ENCODE measurements at regions of chr12 and their contacts with region 1.

Region 1: GRCh38 chr12:132489602-132490239 is at the start of gene FBRSL1:
- DNase-seq: peak; percentile 98
- ATAC-seq: peak; percentile 74
- H3K4me3 Mint-ChIP-seq: peak within 1 kb of the TSS; percentile 85
- H3K27ac Mint-ChIP-seq: peak within 1 kb of the TSS; percentile 85
- H3K4me1 Mint-ChIP-seq: peaks cover 61% of the 10 kb centered on the region
- H3K27me3 Mint-ChIP-seq: no peaks in the 10 kb centered on the region
- total RNA-seq, gene FBRSL1: 35.7 to 55.1 TPM

Region 2: GRCh38 chr12:131894313-131894860 is 595.3 kb before region 1 on chr12 and contains the start of gene ULK1:
- CTCF ChIA-PET with region 1: no interaction called
- POLR2A ChIA-PET with region 1: no interaction called
- intact Hi-C with region 1: loop called in 1 of 2 experiments (anchors 1 kb)
- DNase-seq: peak; percentile 96
- ATAC-seq: peak; percentile 86
- H3K4me3 Mint-ChIP-seq: peak within 1 kb of the TSS; percentile 78
- H3K27ac Mint-ChIP-seq: peak within 1 kb of the TSS; percentile 55
- H3K4me1 Mint-ChIP-seq: peaks cover 12% of the 10 kb centered on the region
- H3K27me3 Mint-ChIP-seq: no peaks in the 10 kb centered on the region
- total RNA-seq, gene ULK1: 12.9 to 14.4 TPM

Region 3: DNA sequence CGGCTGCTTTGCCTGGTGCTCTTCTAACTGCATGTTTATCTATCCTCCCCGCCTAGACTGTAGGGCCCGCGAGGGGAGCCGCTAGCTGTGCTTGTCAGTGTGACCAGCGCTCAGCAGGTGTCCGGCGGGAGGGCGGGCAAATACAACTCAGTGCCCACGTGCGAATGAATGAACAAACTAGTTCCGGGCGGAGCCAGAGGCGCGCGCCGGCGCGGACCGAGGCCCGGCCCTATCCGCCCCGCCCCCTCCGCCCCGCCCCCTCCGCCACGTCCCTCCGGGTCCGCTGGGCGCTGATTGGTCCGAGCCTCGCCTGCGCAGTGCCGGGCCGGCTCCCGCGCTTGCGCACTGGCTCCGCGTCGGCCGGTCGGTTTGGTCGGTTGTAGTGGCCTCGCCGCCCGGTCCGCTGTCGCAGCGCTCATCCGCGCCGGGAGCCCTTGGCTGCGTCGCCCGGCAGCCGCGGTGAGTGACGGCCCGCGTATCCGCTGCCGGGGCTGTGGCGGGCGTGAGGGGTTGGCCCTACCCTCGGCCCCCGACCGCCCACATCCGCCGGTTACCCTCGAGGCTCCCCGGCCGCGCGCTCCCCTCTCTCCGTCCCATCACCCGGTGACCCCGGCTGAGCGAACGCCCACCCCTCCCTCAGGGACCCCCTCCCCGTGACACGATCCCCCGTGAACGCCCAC is 405.6 kb before region 1 on chr12:
- CTCF ChIA-PET with region 1: no interaction called
- POLR2A ChIA-PET with region 1: no interaction called
- intact Hi-C with region 1: loop called in 1 of 2 experiments (anchors 5 kb)
- DNase-seq: peak; percentile 94
- ATAC-seq: peak; percentile 95
- H3K4me3 Mint-ChIP-seq: peak overlapping the region; percentile 86
- H3K27ac Mint-ChIP-seq: peak overlapping the region; percentile 91
- H3K4me1 Mint-ChIP-seq: peaks cover 23% of the 10 kb centered on the region
- H3K27me3 Mint-ChIP-seq: no peaks in the 10 kb centered on the region

Region 4: DNA sequence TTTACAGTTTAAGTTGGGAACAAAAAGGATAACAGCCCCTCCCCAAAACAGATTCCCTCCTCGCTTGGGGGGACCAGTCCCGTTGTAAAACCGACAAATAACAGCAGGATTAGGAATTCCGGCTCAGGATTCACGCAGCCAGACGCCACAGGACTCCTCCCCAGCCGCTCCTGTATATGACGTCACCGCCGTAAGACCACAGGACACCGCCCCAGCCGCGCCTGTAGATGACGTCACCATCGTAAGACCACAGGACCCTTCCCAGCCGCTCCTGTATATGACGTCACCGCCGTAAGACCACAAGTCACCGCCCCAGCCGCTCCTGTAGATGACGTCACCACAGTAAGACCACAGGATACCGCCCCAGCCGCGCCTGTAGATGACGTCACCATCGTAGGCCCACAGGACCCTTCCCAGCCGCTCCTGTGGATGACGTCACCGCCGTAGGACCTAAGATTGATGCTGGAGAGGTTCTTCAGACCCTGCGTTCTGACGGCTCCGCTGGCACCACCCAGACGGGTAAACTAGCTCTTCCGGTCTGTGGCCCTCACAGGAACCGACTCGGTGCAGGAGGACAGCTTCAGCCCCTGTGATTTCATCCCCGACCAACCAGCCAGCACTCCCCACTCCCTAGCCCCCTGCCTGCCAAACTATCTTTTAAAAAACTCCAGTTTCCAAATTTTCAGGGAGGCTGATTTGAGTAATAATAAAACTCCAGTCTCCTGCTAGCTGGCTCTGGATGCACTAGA is 43.7 kb before region 1 on chr12:
- CTCF ChIA-PET with region 1: no interaction called
- POLR2A ChIA-PET with region 1: no interaction called
- intact Hi-C with region 1: loop called in 1 of 2 experiments (anchors 1 kb)
- DNase-seq: peak; percentile 79
- ATAC-seq: peak; percentile 22
- H3K4me3 Mint-ChIP-seq: peak overlapping the region; percentile 87
- H3K27ac Mint-ChIP-seq: peak overlapping the region; percentile 100
- H3K4me1 Mint-ChIP-seq: peaks cover 45% of the 10 kb centered on the region
- H3K27me3 Mint-ChIP-seq: no peaks in the 10 kb centered on the region

Region 5: DNA sequence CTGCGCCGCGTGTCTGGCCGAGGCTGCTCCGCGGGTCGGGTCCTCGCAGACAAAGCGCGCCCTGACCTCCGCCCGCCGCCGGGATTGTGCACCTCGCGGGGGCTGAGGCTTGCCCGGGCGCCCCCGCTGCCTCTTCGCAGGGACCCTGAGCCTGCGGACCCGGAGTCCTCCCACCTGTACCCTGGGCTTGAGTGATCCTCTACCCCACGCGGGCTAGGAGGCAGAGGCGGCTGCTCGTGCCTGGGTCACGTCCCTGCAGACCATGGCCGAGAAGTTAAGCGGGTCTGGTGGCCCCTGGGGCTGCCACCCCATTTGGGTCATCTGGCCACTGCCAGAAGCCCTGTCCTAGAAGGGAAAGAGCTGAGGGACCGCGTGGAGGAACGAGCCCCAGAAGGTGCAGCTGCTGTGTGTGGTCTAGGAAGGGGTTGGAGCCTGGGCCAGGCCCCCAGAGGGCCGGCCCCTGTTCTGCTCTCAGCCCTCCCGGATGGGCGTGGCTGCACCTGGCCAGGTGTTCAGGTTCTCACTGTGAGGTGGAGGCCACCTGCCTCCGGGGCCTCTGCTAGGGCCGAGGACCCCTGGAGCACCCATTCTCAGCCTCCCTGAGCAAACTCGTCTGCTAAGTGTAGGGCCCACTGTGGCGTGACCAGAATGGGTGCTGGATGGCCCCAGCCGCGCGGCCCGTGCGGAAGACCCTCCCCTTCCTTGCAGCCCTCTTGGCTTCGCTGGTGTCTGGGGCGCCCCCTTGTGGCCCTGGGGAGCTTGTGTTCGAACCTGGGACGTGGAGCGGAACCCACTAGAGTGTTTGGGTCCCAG is 71.1 kb after region 1 on chr12:
- CTCF ChIA-PET with region 1: interaction called, 3 read pairs
- POLR2A ChIA-PET with region 1: no interaction called
- intact Hi-C with region 1: loop called in 1 of 2 experiments (anchors 1 kb)
- DNase-seq: peak; percentile 90
- ATAC-seq: peak; percentile 74
- H3K4me3 Mint-ChIP-seq: peak overlapping the region; percentile 73
- H3K27ac Mint-ChIP-seq: no peak overlapping the region
- H3K4me1 Mint-ChIP-seq: peaks cover 13% of the 10 kb centered on the region
- H3K27me3 Mint-ChIP-seq: peaks cover 7% of the 10 kb centered on the region

Region 6: DNA sequence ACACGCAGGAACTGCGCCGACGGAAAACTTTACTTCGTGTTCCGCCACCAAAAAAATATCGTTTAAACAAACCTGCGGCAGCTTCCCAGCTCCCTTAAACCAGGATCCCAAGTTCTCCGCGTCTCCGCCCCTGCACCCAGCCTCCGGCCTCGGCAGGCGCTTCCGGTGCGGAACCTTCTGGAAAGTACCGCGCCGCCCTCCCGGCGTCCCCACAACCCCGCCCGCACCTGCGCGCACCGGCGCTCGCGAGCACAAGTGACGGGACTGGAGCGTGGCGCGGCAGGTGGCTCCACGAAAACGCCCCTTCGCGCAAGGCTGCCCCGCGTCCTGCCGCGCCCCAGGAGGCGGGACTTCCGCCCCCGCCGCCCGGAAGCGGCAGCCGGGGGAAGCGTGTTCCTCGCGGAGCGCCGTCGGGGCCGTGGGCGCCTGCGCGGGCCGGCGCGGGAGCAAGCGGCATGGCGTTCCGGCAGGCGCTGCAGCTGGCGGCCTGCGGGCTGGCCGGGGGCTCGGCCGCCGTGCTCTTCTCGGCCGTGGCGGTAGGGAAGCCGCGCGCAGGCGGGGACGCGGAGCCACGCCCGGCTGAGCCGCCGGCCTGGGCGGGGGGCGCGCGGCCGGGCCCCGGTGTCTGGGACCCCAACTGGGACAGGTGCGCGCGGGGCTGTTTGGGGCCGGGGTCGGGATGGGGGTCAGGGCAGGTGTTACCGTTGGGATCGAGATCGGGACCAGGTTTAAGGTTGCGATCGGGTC is 220.9 kb after region 1 on chr12 and contains the start of gene PGAM5:
- CTCF ChIA-PET with region 1: no interaction called
- POLR2A ChIA-PET with region 1: no interaction called
- intact Hi-C with region 1: loop called in 1 of 2 experiments (anchors 1 kb)
- DNase-seq: peak; percentile 92
- ATAC-seq: peak; percentile 92
- H3K4me3 Mint-ChIP-seq: peak within 1 kb of the TSS; percentile 75
- H3K27ac Mint-ChIP-seq: peak within 1 kb of the TSS; percentile 66
- H3K4me1 Mint-ChIP-seq: peaks cover 24% of the 10 kb centered on the region
- H3K27me3 Mint-ChIP-seq: no peaks in the 10 kb centered on the region
- total RNA-seq, gene PGAM5: 65.6 to 74.0 TPM

Region 7: DNA sequence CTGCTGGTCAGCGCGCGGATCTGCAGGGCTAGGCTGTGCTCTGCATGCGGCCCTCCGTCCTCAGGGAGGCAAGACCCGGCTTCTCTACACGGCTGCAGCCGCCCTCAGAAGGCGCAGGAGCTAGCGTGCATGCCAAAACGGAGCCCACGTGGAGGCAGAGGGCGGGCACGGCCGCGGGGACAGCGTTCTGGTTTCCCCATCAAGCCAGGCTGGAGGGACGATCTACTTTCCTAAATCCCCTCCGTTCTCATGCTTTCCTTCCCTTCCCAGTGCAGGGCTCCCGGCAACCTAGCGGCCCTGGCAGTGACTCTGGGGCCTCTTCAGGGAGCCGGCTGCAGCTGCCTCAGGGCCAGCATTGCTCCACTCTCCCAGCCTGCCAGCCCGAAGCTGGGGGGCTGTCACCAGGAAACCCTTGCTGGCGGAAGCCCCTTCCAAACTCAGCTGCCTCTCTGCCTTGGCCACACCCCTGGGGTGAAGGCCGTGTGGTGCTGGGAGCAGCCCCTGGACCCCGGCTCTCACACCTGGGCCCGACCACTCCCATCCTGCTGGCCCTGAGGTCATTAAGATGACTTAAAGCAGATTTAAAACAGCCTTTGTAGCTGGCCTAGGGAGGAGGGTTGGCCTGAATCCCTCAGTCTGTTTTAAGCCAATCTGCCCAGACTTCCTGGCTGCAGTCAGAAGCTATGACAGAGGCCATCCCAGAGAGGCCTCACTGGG is 348.1 kb after region 1 on chr12:
- CTCF ChIA-PET with region 1: no interaction called
- POLR2A ChIA-PET with region 1: no interaction called
- intact Hi-C with region 1: no loop called
- DNase-seq: no peak
- ATAC-seq: no peak
- H3K4me3 Mint-ChIP-seq: no peak overlapping the region
- H3K27ac Mint-ChIP-seq: no peak overlapping the region
- H3K4me1 Mint-ChIP-seq: peaks cover 31% of the 10 kb centered on the region
- H3K27me3 Mint-ChIP-seq: no peaks in the 10 kb centered on the region

Region 8: GRCh38 chr12:132972374-132972773 is 482.7 kb after region 1 on chr12:
- CTCF ChIA-PET with region 1: no interaction called
- POLR2A ChIA-PET with region 1: no interaction called
- intact Hi-C with region 1: no loop called
- DNase-seq: no peak
- ATAC-seq: no peak
- H3K4me3 Mint-ChIP-seq: no peak overlapping the region
- H3K27ac Mint-ChIP-seq: no peak overlapping the region
- H3K4me1 Mint-ChIP-seq: no peaks in the 10 kb centered on the region
- H3K27me3 Mint-ChIP-seq: peaks cover 1% of the 10 kb centered on the region